Breast epithelium (tissue), 4 donors: ENCODE measurements at regions of chr17 and their contacts with region 1.

Region 1: GRCh38 chr17:14165616-14166015 is 71.0 kb downstream of the CDRT15 start:
- DNase-seq: no peak
- H3K4me3 ChIP-seq: no peak overlapping the region
- H3K27ac ChIP-seq: no peak overlapping the region
- H3K4me1 ChIP-seq: no peaks in the 10 kb centered on the region
- H3K27me3 ChIP-seq: no peaks in the 10 kb centered on the region
- CTCF ChIP-seq: no peak
- POLR2A ChIP-seq: no peak

Region 2: GRCh38 chr17:13609936-13610335 is 555.7 kb before region 1 on chr17:
- intact Hi-C with region 1: loop called (anchors 5 kb)
- DNase-seq: no peak
- H3K4me3 ChIP-seq: no peak overlapping the region
- H3K27ac ChIP-seq: no peak overlapping the region
- H3K4me1 ChIP-seq: no peaks in the 10 kb centered on the region
- H3K27me3 ChIP-seq: peaks cover 0 to 8% of the 10 kb centered on the region in 2 donors
- CTCF ChIP-seq: no peak
- POLR2A ChIP-seq: no peak

Region 3: GRCh38 chr17:14038206-14038605 is 127.4 kb before region 1 on chr17:
- intact Hi-C with region 1: no loop called
- DNase-seq: no peak
- H3K4me3 ChIP-seq: no peak overlapping the region
- H3K27ac ChIP-seq: no peak overlapping the region
- H3K4me1 ChIP-seq: no peaks in the 10 kb centered on the region
- H3K27me3 ChIP-seq: no peaks in the 10 kb centered on the region
- CTCF ChIP-seq: no peak
- POLR2A ChIP-seq: no peak

Region 4: GRCh38 chr17:14211801-14212200 is 46.2 kb after region 1 on chr17:
- intact Hi-C with region 1: no loop called
- DNase-seq: no peak
- H3K4me3 ChIP-seq: no peak overlapping the region
- H3K27ac ChIP-seq: no peak overlapping the region
- H3K4me1 ChIP-seq: no peaks in the 10 kb centered on the region
- H3K27me3 ChIP-seq: no peaks in the 10 kb centered on the region
- CTCF ChIP-seq: no peak
- POLR2A ChIP-seq: no peak